CD4-positive, alpha-beta memory T cell (primary cell): ENCODE measurements at regions of chr1 and their contacts with region 1.

Region 1: DNA sequence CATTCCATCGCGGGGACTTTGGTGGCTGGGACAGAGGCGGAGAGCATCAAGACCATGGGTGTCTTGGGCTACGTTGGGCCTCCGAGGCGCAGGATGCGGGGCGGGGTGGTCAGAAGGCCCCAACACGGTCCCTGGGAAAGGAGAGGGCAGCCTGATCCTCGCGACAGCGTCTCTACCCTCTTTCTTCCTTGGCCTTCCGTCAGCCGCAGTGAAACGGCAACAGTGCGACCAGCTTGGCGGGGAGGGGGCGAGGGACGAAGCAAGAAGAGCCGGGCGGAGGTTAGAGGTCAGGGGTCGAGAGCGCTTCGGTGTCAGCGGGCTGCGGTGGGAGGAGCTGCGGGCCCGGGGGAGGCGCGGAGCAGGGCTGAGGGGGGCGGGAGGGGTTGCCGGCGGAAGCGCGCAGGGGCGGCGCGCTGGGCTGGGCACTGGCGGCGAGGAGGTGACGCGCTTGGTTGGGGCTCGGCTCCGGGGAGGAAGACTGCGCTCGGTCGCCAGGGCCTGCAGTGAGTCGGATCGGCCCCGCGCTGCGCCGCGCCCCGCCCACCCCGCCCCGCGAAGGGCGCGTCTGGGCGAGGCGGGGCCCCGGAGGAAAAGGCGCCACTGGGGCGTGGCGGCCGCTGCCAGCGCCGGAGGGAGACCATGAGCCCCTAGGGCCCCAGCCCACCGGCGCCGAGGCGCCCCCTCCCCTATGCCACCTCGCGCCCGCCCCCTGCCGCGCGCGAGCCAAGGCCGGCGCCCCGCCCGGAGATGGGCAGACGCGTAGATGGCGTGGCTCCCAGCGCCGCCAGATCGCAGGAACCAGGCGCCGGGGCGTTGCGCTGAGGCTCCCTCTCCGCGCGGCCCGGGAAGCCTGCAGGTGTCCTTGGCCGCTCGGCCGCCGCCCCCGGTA is at the start of gene KCNC4:
- DNase-seq: peak; percentile 91 to 95 (median 94)
- H3K4me3 ChIP-seq: peak within 1 kb of the TSS; percentile 36 to 68
- H3K4me3 Mint-ChIP-seq: peak within 1 kb of the TSS; percentile 87 to 95 (median 89)
- H3K27ac ChIP-seq: peak within 1 kb of the TSS; percentile 81
- H3K27ac Mint-ChIP-seq: peak within 1 kb of the TSS; percentile 89 to 98 (median 97)
- H3K4me1 ChIP-seq: peaks cover 44% of the 10 kb centered on the region
- H3K4me1 Mint-ChIP-seq: peaks cover 32 to 64% (median 45%) of the 10 kb centered on the region in 4 donors
- H3K27me3 ChIP-seq: no peaks in the 10 kb centered on the region
- H3K27me3 Mint-ChIP-seq: no peaks in the 10 kb centered on the region
- total RNA-seq, gene KCNC4: 11.9 to 13.4 TPM

Region 2: DNA sequence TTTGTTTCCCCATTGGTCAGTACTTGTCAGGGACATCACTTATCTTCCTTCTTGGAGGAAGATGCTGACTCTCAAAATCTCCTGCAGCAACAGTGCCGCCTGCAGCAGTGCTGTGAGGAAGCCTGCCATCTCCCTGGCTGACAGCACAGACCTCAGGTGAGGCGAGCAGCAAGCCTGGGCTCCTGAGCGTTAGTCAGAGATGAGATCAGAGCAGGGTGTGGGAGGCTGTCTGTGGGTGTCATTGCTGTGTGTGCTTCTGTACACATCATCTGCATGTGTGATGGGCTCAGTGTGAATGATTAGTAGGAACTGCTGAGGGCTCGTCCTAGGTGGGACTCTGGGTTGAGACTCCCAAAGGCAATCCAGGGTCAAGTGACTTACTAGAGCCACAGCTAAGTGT is 169.4 kb before region 1 on chr1:
- CTCF ChIA-PET with region 1: no interaction called
- POLR2A ChIA-PET with region 1: no interaction called
- intact Hi-C with region 1: no loop called
- DNase-seq: no peak
- H3K4me3 ChIP-seq: no peak overlapping the region
- H3K4me3 Mint-ChIP-seq: no peak overlapping the region
- H3K27ac ChIP-seq: no peak overlapping the region
- H3K27ac Mint-ChIP-seq: no peak overlapping the region
- H3K4me1 ChIP-seq: peaks cover 12% of the 10 kb centered on the region
- H3K4me1 Mint-ChIP-seq: peaks cover 10 to 17% (median 13%) of the 10 kb centered on the region in 4 donors
- H3K27me3 ChIP-seq: no peaks in the 10 kb centered on the region
- H3K27me3 Mint-ChIP-seq: no peaks in the 10 kb centered on the region

Region 3: GRCh38 chr1:110196917-110197765 is 12.8 kb before region 1 on chr1:
- CTCF ChIA-PET with region 1: interaction called, 23 read pairs
- POLR2A ChIA-PET with region 1: interaction called, 5 read pairs
- intact Hi-C with region 1: no loop called
- DNase-seq: peak; percentile 53 to 65 (median 63)
- H3K4me3 ChIP-seq: no peak overlapping the region
- H3K4me3 Mint-ChIP-seq: no peak overlapping the region
- H3K27ac ChIP-seq: no peak overlapping the region
- H3K27ac Mint-ChIP-seq: peak overlapping the region in 2 of 7 donors; percentile 56 to 80
- H3K4me1 ChIP-seq: no peaks in the 10 kb centered on the region
- H3K4me1 Mint-ChIP-seq: peaks cover 0 to 3% (median under 1%) of the 10 kb centered on the region in 4 donors
- H3K27me3 ChIP-seq: no peaks in the 10 kb centered on the region
- H3K27me3 Mint-ChIP-seq: no peaks in the 10 kb centered on the region

Region 4: DNA sequence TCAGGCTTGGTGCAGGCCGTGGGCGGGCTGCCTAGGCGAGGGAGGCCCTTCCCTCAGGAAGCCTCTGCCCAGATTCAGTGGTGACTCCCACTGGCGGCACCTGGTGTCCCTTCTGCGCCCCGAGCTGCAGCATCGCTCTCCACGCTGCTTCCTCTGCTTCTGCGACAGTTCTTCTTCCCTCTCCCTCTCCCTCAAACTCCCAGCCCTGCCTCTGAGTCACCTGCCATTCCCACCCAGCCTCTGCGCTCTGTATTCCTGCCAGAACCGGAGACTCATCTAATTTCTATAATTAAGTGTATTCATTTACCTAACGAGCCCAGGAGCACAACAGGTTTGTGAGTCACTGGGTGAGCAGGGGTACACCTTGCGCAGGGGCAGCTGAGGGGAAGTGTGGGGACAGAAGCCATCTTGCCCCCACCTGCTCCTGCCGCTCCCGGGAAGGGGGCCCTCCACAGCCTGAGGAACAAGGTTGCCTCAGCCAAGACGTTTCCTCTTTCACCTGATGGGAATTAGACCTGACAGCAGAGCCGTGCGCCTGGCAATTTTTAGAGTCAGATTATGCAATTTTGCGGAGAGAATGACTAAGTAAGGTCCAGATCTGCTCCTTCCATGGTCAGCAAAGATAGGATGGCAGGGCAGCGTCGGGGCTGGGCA is 19.5 kb after region 1 on chr1:
- CTCF ChIA-PET with region 1: interaction called, 12 read pairs
- POLR2A ChIA-PET with region 1: interaction called, 4 read pairs
- intact Hi-C with region 1: no loop called
- DNase-seq: no peak
- H3K4me3 ChIP-seq: no peak overlapping the region
- H3K4me3 Mint-ChIP-seq: no peak overlapping the region
- H3K27ac ChIP-seq: no peak overlapping the region
- H3K27ac Mint-ChIP-seq: peak overlapping the region in 1 of 7 donors; percentile 57
- H3K4me1 ChIP-seq: no peaks in the 10 kb centered on the region
- H3K4me1 Mint-ChIP-seq: peaks cover 0 to 3% (median 0%) of the 10 kb centered on the region in 4 donors
- H3K27me3 ChIP-seq: no peaks in the 10 kb centered on the region
- H3K27me3 Mint-ChIP-seq: no peaks in the 10 kb centered on the region

Region 5: GRCh38 chr1:110312188-110313121 is 102.5 kb after region 1 on chr1:
- CTCF ChIA-PET with region 1: interaction called, 724 read pairs
- POLR2A ChIA-PET with region 1: interaction called, 44 read pairs
- intact Hi-C with region 1: loop called (anchors 1 kb)
- DNase-seq: peak; percentile 67 to 73 (median 70)
- H3K4me3 ChIP-seq: no peak overlapping the region
- H3K4me3 Mint-ChIP-seq: peak overlapping the region in 2 of 8 donors; percentile 32 to 57
- H3K27ac ChIP-seq: no peak overlapping the region
- H3K27ac Mint-ChIP-seq: peak overlapping the region in 2 of 7 donors; percentile 17 to 59
- H3K4me1 ChIP-seq: no peaks in the 10 kb centered on the region
- H3K4me1 Mint-ChIP-seq: peaks cover 0 to 2% (median under 1%) of the 10 kb centered on the region in 4 donors
- H3K27me3 ChIP-seq: no peaks in the 10 kb centered on the region
- H3K27me3 Mint-ChIP-seq: no peaks in the 10 kb centered on the region

Region 6: DNA sequence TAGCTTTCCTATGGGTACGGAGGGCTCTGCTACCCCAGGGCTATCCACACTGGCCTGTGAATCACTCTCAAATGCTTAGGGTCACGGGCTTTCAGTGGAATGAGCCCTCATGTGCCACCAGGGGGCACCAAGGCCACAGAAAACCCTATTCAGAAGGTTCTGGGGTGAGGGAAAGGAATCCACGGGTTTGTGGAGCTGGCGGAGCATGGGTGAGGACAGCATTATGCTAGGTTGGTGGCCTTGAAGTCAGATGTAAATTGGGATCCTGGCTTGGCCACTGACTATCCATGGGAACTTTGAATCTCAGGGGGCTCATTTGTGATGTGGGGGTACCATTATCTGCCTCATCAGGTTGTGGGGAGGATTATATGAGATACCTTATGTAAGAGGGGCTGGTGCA is 202.6 kb after region 1 on chr1:
- CTCF ChIA-PET with region 1: interaction called, 45 read pairs
- POLR2A ChIA-PET with region 1: interaction called, 13 read pairs
- intact Hi-C with region 1: no loop called
- DNase-seq: peak; percentile 52 to 63 (median 56)
- H3K4me3 ChIP-seq: no peak overlapping the region
- H3K4me3 Mint-ChIP-seq: no peak overlapping the region
- H3K27ac ChIP-seq: no peak overlapping the region
- H3K27ac Mint-ChIP-seq: peak overlapping the region in 4 of 7 donors; percentile 5 to 84 (median 49)
- H3K4me1 ChIP-seq: peaks cover 15% of the 10 kb centered on the region
- H3K4me1 Mint-ChIP-seq: peaks cover 10 to 19% (median 13%) of the 10 kb centered on the region in 4 donors
- H3K27me3 ChIP-seq: no peaks in the 10 kb centered on the region
- H3K27me3 Mint-ChIP-seq: no peaks in the 10 kb centered on the region